Head of caudate nucleus (tissue), 42 donors: ENCODE measurements at regions of chr2 and their contacts with region 1.

Region 1: DNA sequence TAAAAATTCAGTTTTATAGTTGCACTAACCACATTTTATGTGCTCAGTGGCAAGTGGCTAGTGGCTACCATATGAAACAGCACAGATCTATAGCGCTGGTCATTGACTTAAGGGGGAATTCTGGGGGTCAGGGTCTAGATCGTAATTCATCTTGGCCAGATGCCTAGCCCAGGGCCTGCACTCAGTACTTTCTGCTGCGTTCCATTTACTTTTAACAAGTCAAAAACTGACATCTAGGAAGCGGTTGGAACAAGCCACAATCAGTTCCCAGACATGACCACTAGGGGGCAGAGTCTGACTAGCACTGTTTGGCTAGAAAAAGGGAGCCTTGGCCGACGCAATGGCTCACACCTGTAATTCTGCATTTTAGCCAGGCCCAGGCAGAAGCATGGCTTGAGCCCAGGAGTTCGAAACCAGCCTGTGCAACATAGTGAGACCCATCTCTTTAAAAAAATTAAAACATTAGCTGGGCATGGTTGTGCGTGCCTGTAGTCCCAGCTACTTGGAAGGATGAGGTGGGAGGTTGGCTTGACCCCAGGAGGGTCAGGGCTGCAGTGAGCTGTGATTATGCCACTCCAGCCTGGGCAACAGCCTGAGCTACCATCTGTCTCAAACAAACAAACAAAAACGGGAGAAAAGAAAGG is 9.0 kb upstream of the TMBIM1 start:
- DNase-seq: peak; percentile 47 to 95 (median 85)

Region 2: DNA sequence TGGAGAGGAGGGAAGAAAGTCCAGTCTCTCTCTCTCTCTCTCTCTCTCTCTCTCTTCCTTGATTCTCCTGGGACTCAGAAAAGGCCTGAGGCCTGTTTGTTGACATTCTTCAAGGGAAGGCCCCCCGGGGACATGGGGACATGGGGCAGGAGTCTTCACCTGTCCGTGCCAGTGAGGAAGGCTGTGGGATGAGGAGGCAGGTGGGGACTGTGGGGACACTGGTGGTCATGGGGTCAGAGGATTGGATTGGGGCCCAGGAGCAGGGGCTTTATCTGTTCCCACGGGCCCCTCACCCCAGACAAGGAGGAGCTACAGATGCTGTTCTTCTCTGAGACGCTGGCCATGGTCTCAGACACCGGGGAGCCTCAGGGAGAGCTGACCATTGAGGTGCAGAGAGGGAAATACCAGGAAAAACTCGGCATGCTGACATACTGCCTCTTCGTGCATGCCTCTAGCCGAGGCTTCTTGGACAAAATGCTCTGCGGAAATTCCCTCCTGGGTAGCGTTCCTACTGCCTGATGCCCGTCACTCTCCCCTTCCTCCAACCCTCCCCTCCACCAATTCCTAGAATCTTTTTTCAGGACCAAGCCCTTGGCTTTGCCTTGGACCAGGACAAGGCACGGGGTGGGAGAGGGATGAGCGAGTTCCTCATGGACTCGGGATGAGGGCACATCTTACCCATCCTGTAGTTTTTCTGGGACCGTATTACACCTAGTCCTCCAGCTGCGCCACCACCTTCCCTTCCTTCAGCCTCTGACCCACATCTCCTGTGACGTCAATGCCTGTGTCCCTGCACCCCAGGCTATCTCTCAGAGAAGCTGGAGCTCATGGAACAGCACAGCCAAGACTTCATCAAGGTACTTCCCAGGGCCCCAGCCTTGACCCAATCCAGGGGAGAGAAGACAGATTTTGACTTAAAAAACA is 56.2 kb after region 1 on chr2:
- intact Hi-C with region 1: loop called (anchors 10 kb)
- DNase-seq: no peak